Cardiac septum (tissue), 1 donor: ENCODE measurements at regions of chr17 and their contacts with region 1.

Region 1: GRCh38 chr17:77208217-77208808 is 67.5 kb downstream of the SEC14L1 start:
- DNase-seq: no peak

Region 2: GRCh38 chr17:77002103-77003045 is 205.9 kb before region 1 on chr17:
- intact Hi-C with region 1: no loop called
- DNase-seq: no peak

Region 3: DNA sequence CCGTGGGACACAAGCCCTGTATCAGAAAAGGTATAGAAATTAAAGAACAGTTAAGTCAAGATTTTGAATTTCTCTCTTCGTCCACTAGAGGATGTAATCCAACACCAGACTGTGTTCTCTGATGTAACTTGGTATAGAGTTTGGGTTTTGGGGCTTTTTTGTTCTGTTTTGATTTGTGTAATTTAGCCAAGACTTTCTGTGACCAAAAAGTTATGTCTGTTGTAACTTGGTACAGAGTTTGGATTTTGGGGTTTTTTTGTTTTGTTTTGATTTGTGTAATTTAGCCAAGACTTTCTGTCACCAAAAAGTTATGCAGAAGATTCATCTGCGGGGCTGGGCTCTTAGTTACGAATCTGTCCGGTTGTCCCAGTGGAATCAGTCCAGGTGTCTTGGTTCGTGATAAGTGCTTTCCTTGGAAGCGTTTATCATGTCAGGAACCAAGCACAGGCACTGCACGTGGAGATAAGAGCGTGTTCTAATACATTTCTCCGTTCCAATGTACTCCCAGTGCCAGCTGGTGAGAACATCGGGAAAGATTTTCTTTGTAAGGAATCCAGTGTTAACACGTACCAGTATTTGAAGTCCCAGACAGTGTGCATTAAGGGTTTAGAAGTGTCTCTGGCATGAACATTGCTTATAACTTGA is 111.6 kb before region 1 on chr17:
- intact Hi-C with region 1: loop called (anchors 2 kb)
- DNase-seq: no peak

Region 4: GRCh38 chr17:77182205-77183172 is 25.8 kb before region 1 on chr17:
- intact Hi-C with region 1: loop called (anchors 2 kb)
- DNase-seq: no peak